ENCODE measurements at regions of chr5 and their contacts with region 1.

Region 1: DNA sequence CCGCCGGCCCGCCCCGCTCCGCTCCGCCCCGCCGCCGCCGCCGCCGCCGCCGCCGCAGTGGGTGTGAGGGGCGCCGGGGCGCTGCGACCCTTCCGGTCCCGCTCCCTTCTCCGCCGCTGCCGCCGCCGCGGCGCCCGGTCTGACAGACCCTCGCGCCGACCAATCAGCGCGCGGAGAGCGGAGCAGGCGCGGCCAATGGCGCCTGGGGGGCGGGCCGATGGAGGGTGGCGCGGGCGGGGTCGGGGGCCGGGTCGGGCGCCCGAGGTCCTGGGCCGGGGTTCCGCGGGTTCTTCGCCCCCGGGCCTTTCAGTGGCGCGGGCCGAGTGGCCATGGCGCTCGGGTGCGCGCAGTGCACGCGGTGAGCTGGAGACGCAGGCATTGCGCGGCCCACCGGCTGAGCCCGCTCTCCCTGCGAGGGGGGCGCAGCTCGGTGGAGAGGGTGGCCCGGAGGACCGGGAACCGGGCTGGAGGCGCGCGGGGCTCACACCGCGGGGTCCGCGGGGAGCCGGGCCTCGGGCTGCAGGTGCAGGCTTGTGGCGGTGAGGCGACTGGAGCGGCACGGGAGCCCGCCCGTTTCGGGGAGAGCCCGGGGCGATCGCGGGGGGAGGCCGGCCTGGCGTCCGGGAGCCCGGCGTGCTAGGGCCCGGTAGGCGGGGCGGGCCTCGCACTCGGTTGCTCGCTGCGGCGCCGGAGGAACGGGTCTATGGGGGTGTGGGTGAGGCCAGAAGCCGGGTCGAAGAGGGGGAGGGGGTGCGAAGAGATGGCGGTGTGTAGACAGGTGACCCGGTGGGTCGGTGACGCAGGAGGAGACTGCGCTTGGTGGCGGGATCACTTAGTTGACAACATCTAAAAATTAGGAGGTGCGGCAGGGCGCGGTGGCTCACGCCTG is at the start of gene MAPK9:
- DNase-seq: peak; percentile 86
- H3K4me3 ChIP-seq: peak within 1 kb of the TSS; percentile 99
- H3K27ac ChIP-seq: peak within 1 kb of the TSS; percentile 98
- H3K4me1 ChIP-seq: peaks cover 36% of the 10 kb centered on the region
- H3K27me3 ChIP-seq: no peaks in the 10 kb centered on the region
- CTCF ChIP-seq: no peak
- total RNA-seq, gene MAPK9: 40.9 TPM

Region 2: GRCh38 chr5:180161420-180162303 is 130.5 kb before region 1 on chr5:
- intact Hi-C with region 1: no loop called
- DNase-seq: no peak
- H3K4me3 ChIP-seq: no peak overlapping the region
- H3K27ac ChIP-seq: no peak overlapping the region
- H3K4me1 ChIP-seq: no peaks in the 10 kb centered on the region
- H3K27me3 ChIP-seq: peaks cover 27% of the 10 kb centered on the region
- CTCF ChIP-seq: no peak

Region 3: DNA sequence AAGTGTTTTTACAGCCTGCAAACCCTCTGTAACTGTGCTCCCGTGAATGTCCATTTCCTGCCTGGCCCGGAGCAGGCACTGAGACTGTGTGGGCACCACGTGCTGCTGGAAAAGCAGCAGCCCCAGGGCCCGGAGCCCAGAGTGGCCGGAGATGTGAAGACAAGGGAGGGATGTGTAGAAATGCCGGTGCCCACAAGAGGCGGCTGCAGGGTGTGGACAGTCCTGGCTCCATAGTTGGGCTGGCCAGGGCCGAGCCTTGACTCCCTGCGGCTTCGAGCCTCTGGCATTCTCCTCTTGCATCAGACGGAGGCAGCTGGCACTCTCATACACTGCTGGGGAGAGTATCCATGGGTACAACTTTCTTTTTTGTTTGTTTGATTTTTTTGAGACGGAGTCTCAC is 74.1 kb after region 1 on chr5:
- intact Hi-C with region 1: no loop called
- DNase-seq: no peak
- H3K4me3 ChIP-seq: no peak overlapping the region
- H3K27ac ChIP-seq: no peak overlapping the region
- H3K4me1 ChIP-seq: no peaks in the 10 kb centered on the region
- H3K27me3 ChIP-seq: peaks cover 18% of the 10 kb centered on the region
- CTCF ChIP-seq: no peak

Region 4: GRCh38 chr5:180470966-180471582 is 178.9 kb after region 1 on chr5:
- intact Hi-C with region 1: loop called (anchors 10 kb)
- DNase-seq: peak; percentile 32
- H3K4me3 ChIP-seq: no peak overlapping the region
- H3K27ac ChIP-seq: no peak overlapping the region
- H3K4me1 ChIP-seq: peaks cover 5% of the 10 kb centered on the region
- H3K27me3 ChIP-seq: peaks cover 14% of the 10 kb centered on the region
- CTCF ChIP-seq: peak; percentile 94

Measured in left ventricle myocardium inferior (tissue), 1 donor.